ENCODE measurements at regions of chr9 and their contacts with region 1.

Region 1: DNA sequence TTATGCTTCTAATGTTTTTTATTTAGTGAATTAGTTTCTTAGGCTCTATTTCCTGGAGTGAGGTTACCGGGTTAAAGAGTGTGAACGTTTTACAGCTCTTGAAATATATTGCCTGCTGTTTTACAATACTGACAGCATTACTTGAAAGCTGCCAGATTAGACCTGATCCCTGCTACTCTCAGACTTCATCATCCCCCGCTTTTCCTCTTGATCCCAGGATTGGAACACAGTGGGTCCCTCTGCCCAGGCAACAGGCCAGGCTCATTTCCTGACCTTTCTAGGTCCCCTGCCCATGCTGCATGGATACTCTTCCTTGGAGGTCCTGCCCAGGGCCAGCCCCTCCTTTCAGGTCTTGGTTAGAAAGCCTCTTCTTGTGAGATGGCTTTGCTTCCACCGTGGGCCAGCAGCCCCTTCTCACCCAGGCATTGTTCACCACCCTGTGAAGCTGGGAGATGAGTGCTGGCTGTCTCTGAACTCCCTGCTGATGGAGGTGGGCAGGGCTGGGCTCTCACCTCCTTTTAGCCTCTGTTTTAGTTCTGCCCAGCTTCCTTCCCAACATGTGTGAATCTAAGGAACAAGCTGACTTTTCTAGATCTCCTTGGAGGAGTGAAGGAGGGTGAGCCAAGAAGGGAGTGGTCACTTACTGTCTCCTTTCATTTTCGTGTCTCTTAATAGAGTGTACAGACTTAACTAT is 15.5 kb upstream of the FAM120AOS start:
- DNase-seq: no peak
- H3K4me3 Mint-ChIP-seq: no peak overlapping the region
- H3K27ac Mint-ChIP-seq: no peak overlapping the region
- H3K4me1 Mint-ChIP-seq: peaks cover 61% of the 10 kb centered on the region
- H3K27me3 Mint-ChIP-seq: no peaks in the 10 kb centered on the region

Region 2: GRCh38 chr9:93501406-93501805 is 32.5 kb after region 1 on chr9:
- CTCF ChIA-PET with region 1: no interaction called
- intact Hi-C with region 1: loop called (anchors 5 kb)
- DNase-seq: no peak
- H3K4me3 Mint-ChIP-seq: peak overlapping the region; percentile 36
- H3K27ac Mint-ChIP-seq: no peak overlapping the region
- H3K4me1 Mint-ChIP-seq: peaks cover 48% of the 10 kb centered on the region
- H3K27me3 Mint-ChIP-seq: no peaks in the 10 kb centered on the region